Vagina (tissue), 2 donors: ENCODE measurements at regions of chr20 and their contacts with region 1.

Region 1: GRCh38 chr20:34415079-34415478 is 52.0 kb downstream of the ITCH start:
- DNase-seq: no peak
- H3K4me3 ChIP-seq: no peak overlapping the region
- H3K27ac ChIP-seq: no peak overlapping the region
- H3K4me1 ChIP-seq: no peaks in the 10 kb centered on the region
- H3K27me3 ChIP-seq: no peaks in the 10 kb centered on the region
- CTCF ChIP-seq: no peak
- POLR2A ChIP-seq: no peak

Region 2: GRCh38 chr20:32908334-32909292 is 1506.5 kb before region 1 on chr20:
- intact Hi-C with region 1: no loop called
- DNase-seq: no peak
- H3K4me3 ChIP-seq: no peak overlapping the region
- H3K27ac ChIP-seq: no peak overlapping the region
- H3K4me1 ChIP-seq: no peaks in the 10 kb centered on the region
- H3K27me3 ChIP-seq: no peaks in the 10 kb centered on the region
- CTCF ChIP-seq: no peak
- POLR2A ChIP-seq: no peak

Region 3: GRCh38 chr20:33685328-33686099 is 729.6 kb before region 1 on chr20:
- intact Hi-C with region 1: no loop called
- DNase-seq: no peak
- H3K4me3 ChIP-seq: peak overlapping the region; percentile 35 to 59
- H3K27ac ChIP-seq: peak overlapping the region; percentile 23
- H3K4me1 ChIP-seq: peaks cover 19% of the 10 kb centered on the region
- H3K27me3 ChIP-seq: no peaks in the 10 kb centered on the region
- CTCF ChIP-seq: no peak
- POLR2A ChIP-seq: no peak

Region 4: GRCh38 chr20:34452281-34452982 is 37.4 kb after region 1 on chr20:
- intact Hi-C with region 1: loop called (anchors 1 kb)
- DNase-seq: no peak
- H3K4me3 ChIP-seq: no peak overlapping the region
- H3K27ac ChIP-seq: no peak overlapping the region
- H3K4me1 ChIP-seq: no peaks in the 10 kb centered on the region
- H3K27me3 ChIP-seq: no peaks in the 10 kb centered on the region
- CTCF ChIP-seq: no peak
- POLR2A ChIP-seq: no peak

Region 5: GRCh38 chr20:34468951-34469350 is 53.9 kb after region 1 on chr20:
- intact Hi-C with region 1: no loop called
- DNase-seq: no peak
- H3K4me3 ChIP-seq: no peak overlapping the region
- H3K27ac ChIP-seq: no peak overlapping the region
- H3K4me1 ChIP-seq: peaks cover 12% of the 10 kb centered on the region
- H3K27me3 ChIP-seq: no peaks in the 10 kb centered on the region
- CTCF ChIP-seq: no peak
- POLR2A ChIP-seq: no peak